Naive thymus-derived CD4-positive, alpha-beta T cell (primary cell): ENCODE measurements at regions of chr20 and their contacts with region 1.

Region 1: DNA sequence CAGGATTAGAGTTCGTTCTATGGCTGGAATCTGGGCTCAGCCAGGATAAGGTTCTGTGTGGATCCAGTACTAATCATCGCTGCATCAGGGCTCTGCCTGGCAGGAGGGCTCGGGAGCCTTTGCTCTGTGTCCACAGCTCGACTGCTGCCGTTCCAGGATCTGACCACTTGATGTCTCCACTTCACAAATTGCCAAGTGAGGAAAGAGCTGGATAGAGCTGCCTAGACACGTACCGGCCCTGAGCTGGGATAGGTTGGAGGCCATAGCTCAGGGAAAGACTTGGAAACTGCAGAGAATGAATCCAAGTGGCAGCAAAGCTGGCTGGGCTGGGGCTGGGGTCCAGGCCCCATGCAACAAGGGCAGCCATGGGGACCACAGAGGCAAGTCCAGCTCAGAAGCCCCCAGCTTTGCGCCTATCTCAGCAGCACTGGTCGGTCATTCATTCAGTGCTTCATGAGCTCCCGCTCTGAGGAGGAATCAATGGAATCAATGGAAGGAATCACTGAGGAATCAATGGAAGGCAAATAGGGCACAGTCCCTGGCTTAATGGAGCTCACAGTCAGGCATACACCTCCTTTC is 38.0 kb upstream of the TOP1 start:
- DNase-seq: peak; percentile 28 to 62 (median 52)
- ATAC-seq: peak; percentile 79
- H3K4me3 ChIP-seq: no peak overlapping the region
- H3K4me3 Mint-ChIP-seq: peak overlapping the region in 8 of 10 donors; percentile 14 to 68 (median 47)
- H3K27ac ChIP-seq: no peak overlapping the region
- H3K27ac Mint-ChIP-seq: peak overlapping the region in 8 of 9 donors; percentile 44 to 86 (median 75)
- H3K4me1 ChIP-seq: peaks cover 18 to 24% of the 10 kb centered on the region in 2 donors
- H3K4me1 Mint-ChIP-seq: peaks cover 25 to 38% (median 34%) of the 10 kb centered on the region in 7 donors
- H3K27me3 ChIP-seq: no peaks in the 10 kb centered on the region
- H3K27me3 Mint-ChIP-seq: no peaks in the 10 kb centered on the region

Region 2: GRCh38 chr20:40945754-40946450 is 44.7 kb before region 1 on chr20:
- CTCF ChIA-PET with region 1: no interaction called
- POLR2A ChIA-PET with region 1: no interaction called
- intact Hi-C with region 1: no loop called
- DNase-seq: no peak
- ATAC-seq: no peak
- H3K4me3 ChIP-seq: no peak overlapping the region
- H3K4me3 Mint-ChIP-seq: no peak overlapping the region
- H3K27ac ChIP-seq: no peak overlapping the region
- H3K27ac Mint-ChIP-seq: no peak overlapping the region
- H3K4me1 ChIP-seq: no peaks in the 10 kb centered on the region
- H3K4me1 Mint-ChIP-seq: peaks cover 0 to 2% (median 0%) of the 10 kb centered on the region in 7 donors
- H3K27me3 ChIP-seq: no peaks in the 10 kb centered on the region
- H3K27me3 Mint-ChIP-seq: peaks cover 0 to 12% (median 7%) of the 10 kb centered on the region in 5 donors

Region 3: GRCh38 chr20:40970201-40970600 is 20.4 kb before region 1 on chr20:
- CTCF ChIA-PET with region 1: interaction called, 31 read pairs
- POLR2A ChIA-PET with region 1: no interaction called
- intact Hi-C with region 1: loop called (anchors 1 kb)
- DNase-seq: no peak
- ATAC-seq: no peak
- H3K4me3 ChIP-seq: no peak overlapping the region
- H3K4me3 Mint-ChIP-seq: no peak overlapping the region
- H3K27ac ChIP-seq: no peak overlapping the region
- H3K27ac Mint-ChIP-seq: no peak overlapping the region
- H3K4me1 ChIP-seq: no peaks in the 10 kb centered on the region
- H3K4me1 Mint-ChIP-seq: peaks cover 5 to 12% (median 9%) of the 10 kb centered on the region in 7 donors
- H3K27me3 ChIP-seq: no peaks in the 10 kb centered on the region
- H3K27me3 Mint-ChIP-seq: peaks cover 0 to 49% (median 8%) of the 10 kb centered on the region in 5 donors

Region 4: DNA sequence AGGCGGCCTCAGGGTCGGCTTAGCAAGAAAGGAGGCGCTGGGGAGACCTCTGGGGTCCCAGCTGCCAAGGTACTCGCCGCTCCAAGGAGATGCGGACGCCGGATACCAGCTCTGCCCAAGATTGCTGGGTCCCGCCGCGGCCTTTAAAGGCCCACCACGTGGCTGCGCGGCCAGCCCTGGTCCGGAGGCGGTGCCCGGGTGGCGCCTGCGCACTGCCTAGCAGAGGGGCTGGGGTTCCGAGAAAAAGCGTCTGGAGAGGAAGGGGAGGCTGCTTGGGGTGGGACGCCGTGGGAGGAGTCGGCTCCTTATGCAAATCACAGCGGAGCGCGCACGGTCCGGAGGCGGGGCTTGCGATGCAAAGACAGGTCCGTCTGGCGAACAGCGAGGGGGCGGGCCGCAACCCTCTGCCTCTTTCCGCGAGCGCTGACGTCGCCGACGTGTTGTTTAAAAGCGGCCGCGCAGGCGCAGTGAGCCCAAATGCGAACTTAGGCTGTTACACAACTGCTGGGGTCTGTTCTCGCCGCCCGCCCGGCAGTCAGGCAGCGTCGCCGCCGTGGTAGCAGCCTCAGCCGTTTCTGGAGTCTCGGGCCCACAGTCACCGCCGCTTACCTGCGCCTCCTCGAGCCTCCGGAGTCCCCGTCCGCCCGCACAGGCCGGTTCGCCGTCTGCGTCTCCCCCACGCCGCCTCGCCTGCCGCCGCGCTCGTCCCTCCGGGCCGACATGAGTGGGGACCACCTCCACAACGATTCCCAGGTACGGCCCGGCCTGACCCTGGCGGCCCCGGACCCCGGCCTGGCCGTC is 37.9 kb after region 1 on chr20 and contains the start of gene TOP1:
- CTCF ChIA-PET with region 1: interaction called, 8 read pairs
- POLR2A ChIA-PET with region 1: interaction called, 5 read pairs
- intact Hi-C with region 1: loop called (anchors 1 kb)
- DNase-seq: peak; percentile 98 to 100 (median 99)
- ATAC-seq: peak; percentile 99
- H3K4me3 ChIP-seq: peak within 1 kb of the TSS; percentile 58
- H3K4me3 Mint-ChIP-seq: peak within 1 kb of the TSS; percentile 79 to 96 (median 94)
- H3K27ac ChIP-seq: peak within 1 kb of the TSS; percentile 99
- H3K27ac Mint-ChIP-seq: peak within 1 kb of the TSS; percentile 88 to 97 (median 96)
- H3K4me1 ChIP-seq: peaks cover 32 to 38% of the 10 kb centered on the region in 2 donors
- H3K4me1 Mint-ChIP-seq: peaks cover 41 to 52% (median 48%) of the 10 kb centered on the region in 7 donors
- H3K27me3 ChIP-seq: no peaks in the 10 kb centered on the region
- H3K27me3 Mint-ChIP-seq: no peaks in the 10 kb centered on the region
- total RNA-seq, gene TOP1: 32.0 to 82.8 (median 43.4) TPM

Region 5: DNA sequence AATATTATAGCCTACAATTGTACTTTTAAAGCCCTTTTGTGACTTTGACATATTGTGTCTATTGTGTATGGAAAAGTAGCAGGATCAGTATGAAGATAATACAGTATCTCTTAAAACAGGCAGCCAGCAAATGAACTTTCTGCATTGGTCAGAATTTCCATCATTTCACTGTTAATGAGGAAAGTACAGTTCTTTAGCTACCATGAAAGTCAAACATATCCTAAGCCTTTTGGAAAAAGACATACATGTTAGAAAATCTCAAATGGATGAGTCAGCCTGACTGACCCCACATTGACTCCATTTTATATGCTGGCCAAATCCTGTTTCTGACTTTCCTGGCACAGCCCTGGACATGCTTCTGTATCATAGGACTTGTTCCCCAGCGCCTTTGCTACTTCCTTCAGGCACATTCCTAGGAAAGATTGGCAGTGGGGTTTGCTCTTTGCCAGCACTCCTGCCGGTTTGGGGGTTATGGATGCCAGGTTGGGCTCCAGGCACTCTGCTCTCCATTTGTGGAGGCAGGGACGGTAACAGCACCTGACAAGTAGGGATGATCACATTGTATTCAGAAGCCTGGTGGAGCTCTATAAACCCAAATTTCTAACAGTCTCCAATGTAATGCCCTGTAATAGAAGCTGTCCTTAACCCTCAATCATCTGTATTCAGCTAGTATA is 81.7 kb after region 1 on chr20:
- CTCF ChIA-PET with region 1: interaction called, 17 read pairs
- POLR2A ChIA-PET with region 1: interaction called, 3 read pairs
- intact Hi-C with region 1: no loop called
- DNase-seq: no peak
- ATAC-seq: peak; percentile 22
- H3K4me3 ChIP-seq: no peak overlapping the region
- H3K4me3 Mint-ChIP-seq: peak overlapping the region in 6 of 10 donors; percentile 4 to 58 (median 52)
- H3K27ac ChIP-seq: peak overlapping the region; percentile 24
- H3K27ac Mint-ChIP-seq: peak overlapping the region in 6 of 9 donors; percentile 28 to 87 (median 64)
- H3K4me1 ChIP-seq: peaks cover 14 to 48% of the 10 kb centered on the region in 2 donors
- H3K4me1 Mint-ChIP-seq: peaks cover 49 to 92% (median 84%) of the 10 kb centered on the region in 7 donors
- H3K27me3 ChIP-seq: no peaks in the 10 kb centered on the region
- H3K27me3 Mint-ChIP-seq: no peaks in the 10 kb centered on the region

Region 6: DNA sequence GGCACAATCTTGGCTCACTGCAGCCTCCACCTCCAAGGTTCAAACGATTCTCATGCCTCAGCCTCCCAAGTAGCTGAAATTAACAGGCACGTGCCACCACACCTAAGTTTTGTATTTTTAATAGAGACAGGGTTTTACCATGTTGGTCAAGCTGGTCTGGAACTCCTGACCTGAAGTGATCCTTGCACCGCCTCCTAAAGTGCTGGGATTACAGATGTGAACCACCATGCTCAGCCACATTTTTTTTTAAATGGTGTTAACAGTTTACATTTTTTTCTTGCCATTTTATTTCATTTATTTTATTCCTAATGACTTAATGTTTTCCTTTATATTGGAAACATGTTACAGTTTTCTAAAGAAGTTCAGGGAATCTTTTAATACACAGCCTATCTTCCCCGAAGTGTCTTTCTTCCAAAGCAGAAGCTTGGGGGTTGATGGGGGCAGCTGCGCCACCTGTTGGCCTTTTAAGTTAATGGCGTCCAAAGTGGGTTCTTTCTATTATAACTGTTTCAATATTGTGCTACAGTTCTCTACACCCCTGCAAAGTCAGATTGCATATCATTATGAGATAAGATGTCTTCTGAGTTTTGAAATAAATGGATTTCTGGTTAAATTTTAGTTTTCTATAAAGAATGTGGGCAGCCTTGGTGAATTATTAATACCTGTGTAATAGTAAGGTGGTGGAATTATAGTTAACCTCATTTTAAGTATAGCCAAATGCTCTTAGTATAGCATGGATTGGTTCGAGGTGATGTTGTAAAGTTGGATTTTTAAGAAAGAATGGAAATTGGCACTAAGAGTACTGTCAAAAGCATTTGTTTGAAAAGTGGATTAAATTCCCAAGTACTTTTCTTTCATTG is 104.7 kb after region 1 on chr20:
- CTCF ChIA-PET with region 1: interaction called, 177 read pairs
- POLR2A ChIA-PET with region 1: interaction called, 9 read pairs
- intact Hi-C with region 1: loop called (anchors 1 kb)
- DNase-seq: peak; percentile 27 to 63 (median 54)
- ATAC-seq: peak; percentile 85
- H3K4me3 ChIP-seq: no peak overlapping the region
- H3K4me3 Mint-ChIP-seq: no peak overlapping the region
- H3K27ac ChIP-seq: no peak overlapping the region
- H3K27ac Mint-ChIP-seq: peak overlapping the region in 4 of 9 donors; percentile 31 to 77 (median 52)
- H3K4me1 ChIP-seq: no peaks in the 10 kb centered on the region
- H3K4me1 Mint-ChIP-seq: peaks cover 0 to 11% (median 4%) of the 10 kb centered on the region in 7 donors
- H3K27me3 ChIP-seq: no peaks in the 10 kb centered on the region
- H3K27me3 Mint-ChIP-seq: no peaks in the 10 kb centered on the region

Region 7: DNA sequence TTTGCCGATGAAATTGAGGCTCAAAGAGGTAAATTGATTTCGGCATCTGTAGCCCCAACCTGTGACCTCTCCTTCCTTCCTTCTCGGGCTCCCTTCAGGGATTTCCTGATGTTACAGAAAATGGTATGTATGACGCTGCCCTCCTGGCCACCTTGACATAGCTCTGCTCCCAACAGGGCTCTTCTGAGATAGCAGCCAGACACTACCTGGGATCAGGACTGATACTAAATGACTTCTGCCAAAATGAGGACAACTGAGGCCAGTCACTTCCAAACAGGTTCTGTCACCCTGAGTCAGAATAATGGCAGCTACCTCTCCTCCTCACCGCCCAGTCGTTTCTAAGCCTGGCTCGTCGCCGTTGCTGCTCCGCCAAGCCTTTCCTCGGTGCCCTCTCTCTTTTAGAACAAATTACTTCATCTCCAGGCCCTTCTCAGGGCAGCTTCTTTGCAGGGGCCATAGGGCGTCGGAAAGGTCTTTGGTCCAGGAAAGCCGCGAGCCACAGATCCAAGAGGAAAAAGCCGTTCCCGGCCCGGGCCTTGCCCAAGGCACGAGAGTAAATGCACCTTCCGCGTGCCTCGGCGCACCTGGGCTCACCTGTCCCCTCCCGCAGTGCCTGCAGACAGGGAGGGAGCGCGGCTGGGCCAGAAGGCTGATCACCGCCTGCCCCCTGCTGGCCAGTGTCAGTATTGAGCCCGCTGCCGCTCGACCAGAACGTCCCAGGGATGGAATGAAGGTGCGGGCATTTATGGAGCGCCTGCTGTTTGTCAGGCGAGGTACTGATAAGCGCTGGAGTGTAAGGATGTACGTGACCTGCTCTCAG is 349.1 kb after region 1 on chr20:
- CTCF ChIA-PET with region 1: interaction called, 12 read pairs
- POLR2A ChIA-PET with region 1: no interaction called
- intact Hi-C with region 1: loop called in 1 of 2 experiments (anchors 1 kb)
- DNase-seq: peak; percentile 72 to 92 (median 83)
- ATAC-seq: peak; percentile 97
- H3K4me3 ChIP-seq: peak overlapping the region; percentile 28
- H3K4me3 Mint-ChIP-seq: peak overlapping the region; percentile 72 to 85 (median 82)
- H3K27ac ChIP-seq: no peak overlapping the region
- H3K27ac Mint-ChIP-seq: peak overlapping the region in 5 of 9 donors; percentile 47 to 86 (median 67)
- H3K4me1 ChIP-seq: peaks cover 0 to 3% of the 10 kb centered on the region in 2 donors
- H3K4me1 Mint-ChIP-seq: peaks cover 8 to 15% (median 9%) of the 10 kb centered on the region in 7 donors
- H3K27me3 ChIP-seq: no peaks in the 10 kb centered on the region
- H3K27me3 Mint-ChIP-seq: peaks cover 0 to 12% (median 3%) of the 10 kb centered on the region in 5 donors

Region 8: DNA sequence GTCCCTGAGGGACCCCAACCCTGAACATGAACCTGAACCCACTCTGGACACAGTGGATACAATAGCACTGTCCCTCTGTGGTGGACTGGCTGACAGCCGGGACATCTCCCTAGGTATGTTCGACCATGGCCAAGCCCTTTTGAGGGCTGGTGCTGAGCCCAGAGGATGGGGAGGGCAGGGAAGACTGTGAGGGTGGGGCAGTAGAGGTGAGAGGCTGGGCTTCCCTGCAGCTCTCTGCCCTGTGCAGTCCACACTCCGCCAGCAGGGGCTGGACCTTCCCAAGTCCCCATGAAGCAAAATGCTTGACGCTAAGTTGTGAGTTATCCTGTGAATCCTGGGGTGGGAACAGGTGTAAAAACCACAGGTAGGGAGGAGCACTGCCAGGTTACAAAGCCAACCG is 361.5 kb after region 1 on chr20:
- CTCF ChIA-PET with region 1: no interaction called
- POLR2A ChIA-PET with region 1: no interaction called
- intact Hi-C with region 1: no loop called
- DNase-seq: no peak
- ATAC-seq: no peak
- H3K4me3 ChIP-seq: no peak overlapping the region
- H3K4me3 Mint-ChIP-seq: no peak overlapping the region
- H3K27ac ChIP-seq: no peak overlapping the region
- H3K27ac Mint-ChIP-seq: no peak overlapping the region
- H3K4me1 ChIP-seq: no peaks in the 10 kb centered on the region
- H3K4me1 Mint-ChIP-seq: no peaks in the 10 kb centered on the region
- H3K27me3 ChIP-seq: no peaks in the 10 kb centered on the region
- H3K27me3 Mint-ChIP-seq: peaks cover 0 to 3% (median 0%) of the 10 kb centered on the region in 5 donors

Region 9: GRCh38 chr20:41408156-41408794 is 417.6 kb after region 1 on chr20:
- CTCF ChIA-PET with region 1: no interaction called
- POLR2A ChIA-PET with region 1: no interaction called
- intact Hi-C with region 1: no loop called
- DNase-seq: no peak
- ATAC-seq: peak; percentile 66
- H3K4me3 ChIP-seq: no peak overlapping the region
- H3K4me3 Mint-ChIP-seq: peak overlapping the region in 3 of 10 donors; percentile 7 to 64 (median 31)
- H3K27ac ChIP-seq: no peak overlapping the region
- H3K27ac Mint-ChIP-seq: peak overlapping the region; percentile 11 to 79 (median 68)
- H3K4me1 ChIP-seq: peaks cover 3 to 7% of the 10 kb centered on the region in 2 donors
- H3K4me1 Mint-ChIP-seq: peaks cover 20 to 44% (median 25%) of the 10 kb centered on the region in 7 donors
- H3K27me3 ChIP-seq: no peaks in the 10 kb centered on the region
- H3K27me3 Mint-ChIP-seq: no peaks in the 10 kb centered on the region